ENCODE measurements at regions of chr3 and their contacts with region 1.

Region 1: DNA sequence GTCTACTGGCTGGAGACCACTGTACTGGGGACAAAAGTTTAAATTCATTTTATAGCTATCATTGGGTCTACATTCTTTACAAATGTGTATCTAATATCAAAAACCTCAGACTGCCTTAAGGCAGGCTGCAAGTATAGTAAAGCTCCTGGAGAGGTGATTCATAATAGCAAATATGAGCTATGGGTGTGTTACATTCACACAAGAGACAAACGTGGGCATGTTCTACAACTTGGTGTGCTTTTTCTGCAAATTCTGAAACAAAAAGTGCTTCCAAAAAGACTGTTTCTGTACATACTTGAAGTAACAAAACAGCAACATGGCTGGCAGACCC is 1101.4 kb downstream of the ROBO1 start:
- DNase-seq: no peak
- ATAC-seq: no peak
- H3K4me3 ChIP-seq: no peak overlapping the region
- H3K27ac ChIP-seq: no peak overlapping the region
- H3K4me1 ChIP-seq: no peaks in the 10 kb centered on the region
- H3K27me3 ChIP-seq: no peaks in the 10 kb centered on the region
- CTCF ChIP-seq: no peak
- EP300 ChIP-seq: no peak
- POLR2A ChIP-seq: no peak
- RAD21 ChIP-seq: no peak

Region 2: DNA sequence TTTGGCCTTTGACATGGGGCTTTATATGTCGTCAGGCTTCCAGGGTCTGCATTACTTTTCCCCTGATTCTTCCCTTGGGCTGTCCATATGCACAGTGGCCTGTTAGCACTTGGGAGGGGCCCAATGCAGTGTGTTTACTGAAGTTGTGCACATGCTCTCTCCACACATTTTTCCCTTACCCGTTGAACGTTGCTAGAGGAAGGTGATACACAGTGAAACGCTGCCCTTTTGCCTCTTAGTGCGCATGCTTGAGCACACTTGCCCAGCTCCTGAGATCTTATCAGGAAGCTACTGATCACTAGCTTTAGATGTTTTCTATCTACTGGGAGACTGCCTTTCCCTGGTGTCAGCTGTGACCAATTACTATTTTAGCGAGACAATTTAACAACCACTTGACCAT is 96.6 kb before region 1 on chr3:
- CTCF ChIA-PET with region 1: no interaction called
- POLR2A ChIA-PET with region 1: no interaction called
- RAD21 ChIA-PET with region 1: no interaction called
- SMC1A ChIA-PET with region 1: no interaction called
- in situ Hi-C with region 1: no loop called
- intact Hi-C with region 1: no loop called
- DNase-seq: no peak
- ATAC-seq: no peak
- H3K4me3 ChIP-seq: no peak overlapping the region
- H3K27ac ChIP-seq: no peak overlapping the region
- H3K4me1 ChIP-seq: no peaks in the 10 kb centered on the region
- H3K27me3 ChIP-seq: no peaks in the 10 kb centered on the region
- CTCF ChIP-seq: no peak
- EP300 ChIP-seq: no peak
- POLR2A ChIP-seq: no peak
- RAD21 ChIP-seq: no peak

Region 3: GRCh38 chr3:79032686-79033318 is 366.4 kb after region 1 on chr3:
- CTCF ChIA-PET with region 1: interaction called, 104 read pairs
- POLR2A ChIA-PET with region 1: no interaction called
- RAD21 ChIA-PET with region 1: interaction called, 56 read pairs
- SMC1A ChIA-PET with region 1: interaction called, 55 read pairs
- in situ Hi-C with region 1: loop called (anchors 5 kb)
- intact Hi-C with region 1: no loop called
- DNase-seq: no peak
- ATAC-seq: peak; percentile 78
- H3K4me3 ChIP-seq: no peak overlapping the region
- H3K27ac ChIP-seq: no peak overlapping the region
- H3K4me1 ChIP-seq: no peaks in the 10 kb centered on the region
- H3K27me3 ChIP-seq: no peaks in the 10 kb centered on the region
- CTCF ChIP-seq: peak; percentile 35 to 59 (median 35); a peak in 5 of 6 replicates
- EP300 ChIP-seq: no peak
- POLR2A ChIP-seq: no peak
- RAD21 ChIP-seq: peak; percentile 77

Region 4: GRCh38 chr3:79354179-79354688 is 687.8 kb after region 1 on chr3:
- CTCF ChIA-PET with region 1: no interaction called
- POLR2A ChIA-PET with region 1: no interaction called
- RAD21 ChIA-PET with region 1: no interaction called
- SMC1A ChIA-PET with region 1: no interaction called
- in situ Hi-C with region 1: loop called (anchors 10 kb)
- intact Hi-C with region 1: no loop called
- DNase-seq: no peak
- ATAC-seq: no peak
- H3K4me3 ChIP-seq: no peak overlapping the region
- H3K27ac ChIP-seq: no peak overlapping the region
- H3K4me1 ChIP-seq: no peaks in the 10 kb centered on the region
- H3K27me3 ChIP-seq: no peaks in the 10 kb centered on the region
- CTCF ChIP-seq: no peak
- EP300 ChIP-seq: no peak
- POLR2A ChIP-seq: no peak
- RAD21 ChIP-seq: no peak

Region 5: DNA sequence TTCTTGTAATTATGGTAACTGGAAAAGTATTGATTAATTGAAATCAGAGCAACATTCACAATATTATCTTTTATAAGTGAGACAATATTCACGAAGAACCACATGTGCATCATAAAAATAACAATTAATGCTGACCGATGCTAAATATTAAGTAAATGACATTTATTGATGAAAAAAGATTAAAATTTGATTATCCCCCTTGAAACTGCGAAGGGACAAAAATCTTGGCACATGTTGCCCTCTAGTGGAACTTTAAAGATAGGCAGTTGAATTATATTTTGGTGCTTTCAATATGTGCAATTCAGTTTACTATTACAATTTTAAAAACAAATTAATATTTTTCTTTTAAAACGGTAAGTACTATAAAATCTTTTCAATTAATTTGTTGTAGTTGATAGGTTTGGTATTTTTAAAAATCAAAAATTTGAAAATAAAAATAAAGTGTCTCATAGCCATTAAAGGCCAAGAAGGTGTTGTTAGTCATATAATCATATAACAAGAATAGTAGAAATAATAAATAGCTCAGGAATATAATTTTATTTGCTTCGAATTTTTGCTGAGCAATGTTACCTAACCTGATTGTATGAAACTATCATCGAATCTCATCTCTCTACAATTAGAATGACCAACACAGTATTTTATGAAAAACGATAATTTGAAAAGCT is 831.1 kb after region 1 on chr3:
- CTCF ChIA-PET with region 1: no interaction called
- POLR2A ChIA-PET with region 1: no interaction called
- RAD21 ChIA-PET with region 1: no interaction called
- SMC1A ChIA-PET with region 1: no interaction called
- in situ Hi-C with region 1: loop called (anchors 25 kb)
- intact Hi-C with region 1: loop called (anchors 10 kb)
- DNase-seq: no peak
- ATAC-seq: no peak
- H3K4me3 ChIP-seq: no peak overlapping the region
- H3K27ac ChIP-seq: no peak overlapping the region
- H3K4me1 ChIP-seq: no peaks in the 10 kb centered on the region
- H3K27me3 ChIP-seq: no peaks in the 10 kb centered on the region
- CTCF ChIP-seq: peak; percentile 46 to 54 (median 46); a peak in 5 of 6 replicates
- EP300 ChIP-seq: no peak
- POLR2A ChIP-seq: no peak
- RAD21 ChIP-seq: peak; percentile 47

Measured in GM12878 (cell line).